ENCODE measurements at regions of chr3 and their contacts with region 1.

Region 1: DNA sequence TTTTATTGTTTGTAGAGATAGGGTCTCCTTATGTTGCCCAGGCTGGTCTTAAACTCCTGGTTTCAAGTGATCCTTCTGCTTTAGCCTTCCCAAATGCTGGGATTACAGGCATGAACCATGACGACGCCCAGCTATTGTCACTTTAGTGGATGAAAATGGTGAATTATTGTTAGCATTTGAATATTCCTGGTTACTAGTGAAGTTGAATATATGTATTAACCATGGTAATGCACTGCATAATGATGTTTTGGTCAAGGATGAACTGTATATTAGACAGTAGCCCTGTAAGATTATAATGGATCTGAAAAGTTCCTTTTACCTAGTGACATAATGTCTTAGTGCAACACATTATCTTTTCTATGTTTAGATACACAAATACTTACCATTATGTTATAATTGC is 50.4 kb upstream of the KCNAB1 start:
- DNase-seq: no peak
- ATAC-seq: no peak
- H3K4me3 ChIP-seq: no peak overlapping the region
- H3K27ac ChIP-seq: no peak overlapping the region
- H3K4me1 ChIP-seq: no peaks in the 10 kb centered on the region
- H3K27me3 ChIP-seq: no peaks in the 10 kb centered on the region
- CTCF ChIP-seq: no peak
- POLR2A ChIP-seq: no peak

Region 2: GRCh38 chr3:156037356-156037755 is 32.7 kb before region 1 on chr3:
- in situ Hi-C with region 1: no loop called
- intact Hi-C with region 1: loop called (anchors 1 kb)
- DNase-seq: no peak
- ATAC-seq: no peak
- H3K4me3 ChIP-seq: no peak overlapping the region
- H3K27ac ChIP-seq: no peak overlapping the region
- H3K4me1 ChIP-seq: no peaks in the 10 kb centered on the region
- H3K27me3 ChIP-seq: no peaks in the 10 kb centered on the region
- CTCF ChIP-seq: no peak
- POLR2A ChIP-seq: no peak

Region 3: DNA sequence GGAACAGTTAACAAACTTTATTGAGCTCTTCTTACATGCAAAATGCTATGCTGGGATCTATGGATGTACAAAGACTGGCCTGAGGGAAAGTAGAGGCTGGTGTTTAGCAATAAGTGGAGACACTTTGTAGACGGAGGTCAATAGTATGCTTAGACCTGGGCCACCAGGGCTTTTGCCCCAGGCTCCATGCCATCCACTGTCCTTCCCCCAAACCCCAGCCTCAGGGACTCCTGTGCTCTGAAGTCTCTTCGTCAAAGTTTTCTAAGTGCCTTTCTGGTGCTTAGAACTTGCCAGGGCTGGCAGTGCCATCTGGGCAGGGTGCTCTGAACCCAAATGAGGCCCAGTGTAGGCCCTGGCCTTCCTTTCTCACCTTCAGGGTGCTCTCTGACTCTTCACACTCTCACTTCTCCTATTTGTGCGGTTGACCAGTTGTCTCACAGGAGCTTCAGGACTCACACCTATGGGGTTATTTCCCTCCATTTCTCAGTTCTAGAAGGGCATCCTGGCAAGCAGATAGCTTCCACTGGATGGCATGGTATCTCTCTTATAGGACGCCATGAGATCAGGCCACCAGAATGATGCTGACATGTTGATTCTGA is 28.5 kb after region 1 on chr3:
- in situ Hi-C with region 1: no loop called
- intact Hi-C with region 1: no loop called
- DNase-seq: no peak
- ATAC-seq: no peak
- H3K4me3 ChIP-seq: no peak overlapping the region
- H3K27ac ChIP-seq: no peak overlapping the region
- H3K4me1 ChIP-seq: no peaks in the 10 kb centered on the region
- H3K27me3 ChIP-seq: no peaks in the 10 kb centered on the region
- CTCF ChIP-seq: no peak
- POLR2A ChIP-seq: no peak